PC-3 (cell line): ENCODE measurements at regions of chr13 and their contacts with region 1.

Region 1: DNA sequence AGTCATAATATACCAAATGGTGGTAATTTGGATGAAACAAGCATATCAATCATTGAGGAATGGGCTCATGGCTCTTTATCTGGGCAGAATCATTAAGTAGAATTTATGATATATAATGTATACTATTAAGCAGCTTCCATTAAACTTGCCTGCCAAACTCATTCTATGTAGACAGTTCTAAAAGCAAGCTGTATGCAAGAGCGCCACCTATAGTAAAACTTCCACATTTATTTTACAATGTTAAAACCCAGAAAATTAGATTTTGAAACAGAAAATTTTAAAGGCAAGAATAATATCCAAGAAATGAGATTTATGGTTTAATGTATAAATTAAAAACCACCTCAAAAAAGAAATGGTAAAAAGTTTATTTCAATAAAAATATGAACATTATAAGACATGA is 161.5 kb downstream of the MZT1 start:
- DNase-seq: peak; percentile 53
- ATAC-seq: peak; percentile 46; the same call in 1 of the 2 replicates
- H3K4me3 ChIP-seq: no peak overlapping the region
- H3K27ac ChIP-seq: no peak overlapping the region
- H3K4me1 ChIP-seq: no peaks in the 10 kb centered on the region
- H3K27me3 ChIP-seq: no peaks in the 10 kb centered on the region
- CTCF ChIP-seq: peak; percentile 69

Region 2: DNA sequence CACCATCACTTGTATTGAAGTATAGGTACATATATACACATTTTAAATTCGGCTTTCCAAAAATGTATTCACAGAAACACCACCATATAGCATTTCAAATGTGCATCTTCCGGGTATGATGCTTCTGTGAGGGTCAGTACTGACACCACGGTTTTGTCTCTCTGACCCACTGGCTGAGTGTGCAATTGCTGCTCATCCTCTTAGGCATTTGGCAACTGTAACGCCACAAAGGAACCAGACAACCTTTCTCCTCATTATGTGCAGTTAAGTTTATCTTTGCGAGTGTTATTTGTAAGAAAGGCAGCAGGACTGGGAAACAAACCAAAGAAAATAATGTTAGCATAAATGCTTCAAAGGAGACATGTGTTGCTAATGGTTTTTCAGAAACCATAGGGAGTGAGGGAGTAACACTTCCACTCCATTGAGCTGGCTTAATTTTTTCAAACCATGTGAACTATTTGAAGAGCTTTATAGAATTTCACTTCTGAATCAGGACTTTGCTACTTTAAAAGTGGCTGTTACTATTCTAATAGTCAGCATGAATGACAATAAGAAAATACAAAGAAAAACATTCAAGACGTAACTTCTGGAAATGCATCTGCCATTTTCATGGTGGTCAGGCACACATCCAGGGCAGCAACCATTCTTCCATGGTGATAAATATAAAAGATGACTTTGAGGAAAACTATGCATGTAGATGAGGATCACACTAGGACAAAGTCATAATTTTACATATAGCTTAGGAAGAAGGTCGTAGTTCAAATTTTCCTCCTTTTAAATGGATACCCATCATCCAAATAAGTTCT is 261.7 kb before region 1 on chr13:
- CTCF ChIA-PET with region 1: interaction called, 12 read pairs
- POLR2A ChIA-PET with region 1: no interaction called
- intact Hi-C with region 1: no loop called
- DNase-seq: no peak
- ATAC-seq: no peak
- H3K4me3 ChIP-seq: no peak overlapping the region
- H3K27ac ChIP-seq: no peak overlapping the region
- H3K4me1 ChIP-seq: no peaks in the 10 kb centered on the region
- H3K27me3 ChIP-seq: no peaks in the 10 kb centered on the region
- CTCF ChIP-seq: no peak

Region 3: GRCh38 chr13:72651144-72651543 is 85.3 kb after region 1 on chr13:
- CTCF ChIA-PET with region 1: no interaction called
- POLR2A ChIA-PET with region 1: no interaction called
- intact Hi-C with region 1: no loop called
- DNase-seq: peak; percentile 27
- ATAC-seq: no peak
- H3K4me3 ChIP-seq: no peak overlapping the region
- H3K27ac ChIP-seq: no peak overlapping the region
- H3K4me1 ChIP-seq: peaks cover 11% of the 10 kb centered on the region
- H3K27me3 ChIP-seq: peaks cover 8% of the 10 kb centered on the region; the same call in 1 of the 2 replicates
- CTCF ChIP-seq: peak; percentile 39; the same call in 1 of the 2 replicates

Region 4: GRCh38 chr13:72696579-72696978 is 130.7 kb after region 1 on chr13:
- CTCF ChIA-PET with region 1: no interaction called
- POLR2A ChIA-PET with region 1: no interaction called
- intact Hi-C with region 1: loop called (anchors 10 kb)
- DNase-seq: peak; percentile 46
- ATAC-seq: no peak
- H3K4me3 ChIP-seq: no peak overlapping the region
- H3K27ac ChIP-seq: no peak overlapping the region
- H3K4me1 ChIP-seq: no peaks in the 10 kb centered on the region
- H3K27me3 ChIP-seq: no peaks in the 10 kb centered on the region
- CTCF ChIP-seq: peak; percentile 59

Region 5: DNA sequence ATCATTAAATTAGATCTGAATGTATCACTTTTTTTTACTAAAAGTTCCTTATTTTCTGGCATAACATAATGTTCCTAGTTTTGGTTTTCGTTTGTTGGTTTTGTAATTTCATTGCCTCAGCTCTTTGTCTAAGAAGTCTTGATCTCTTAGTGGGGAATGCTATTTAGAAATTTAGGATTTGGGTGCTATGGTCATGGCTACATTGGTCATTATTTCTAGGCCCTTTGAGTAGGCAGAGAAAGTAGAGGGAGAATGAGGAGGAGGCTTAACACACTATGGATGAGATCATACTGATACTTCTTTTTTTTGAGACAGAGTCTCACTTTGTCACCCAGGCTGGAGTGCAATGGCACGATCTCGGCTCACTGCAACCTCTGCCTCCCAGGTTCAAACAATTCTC is 257.8 kb after region 1 on chr13:
- CTCF ChIA-PET with region 1: no interaction called
- POLR2A ChIA-PET with region 1: no interaction called
- intact Hi-C with region 1: no loop called
- DNase-seq: no peak
- ATAC-seq: no peak
- H3K4me3 ChIP-seq: no peak overlapping the region
- H3K27ac ChIP-seq: no peak overlapping the region
- H3K4me1 ChIP-seq: no peaks in the 10 kb centered on the region
- H3K27me3 ChIP-seq: no peaks in the 10 kb centered on the region
- CTCF ChIP-seq: no peak

Region 6: DNA sequence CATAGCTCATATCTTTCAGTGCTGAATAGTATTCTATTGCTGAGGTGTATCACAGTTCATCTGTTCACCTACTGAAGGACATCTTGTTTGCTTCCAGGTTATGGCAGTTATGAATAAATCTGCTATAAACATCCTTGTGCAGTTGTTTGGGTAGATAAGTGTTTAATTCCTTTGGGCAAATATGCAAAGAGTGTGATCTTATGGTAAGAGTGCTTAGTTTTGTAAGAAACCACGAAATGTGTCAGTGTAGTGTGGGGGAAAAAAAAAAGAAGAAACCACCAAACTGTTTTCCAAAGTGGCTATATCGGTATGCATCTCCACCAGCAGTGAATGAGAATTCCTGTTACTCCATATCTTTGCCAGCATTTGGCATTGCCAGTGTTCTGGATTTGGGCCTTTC is 309.3 kb after region 1 on chr13:
- CTCF ChIA-PET with region 1: no interaction called
- POLR2A ChIA-PET with region 1: no interaction called
- intact Hi-C with region 1: no loop called
- DNase-seq: no peak
- ATAC-seq: no peak
- H3K4me3 ChIP-seq: no peak overlapping the region
- H3K27ac ChIP-seq: no peak overlapping the region
- H3K4me1 ChIP-seq: no peaks in the 10 kb centered on the region
- H3K27me3 ChIP-seq: no peaks in the 10 kb centered on the region
- CTCF ChIP-seq: no peak